ENCODE measurements at regions of chr15 and their contacts with region 1.

Region 1: DNA sequence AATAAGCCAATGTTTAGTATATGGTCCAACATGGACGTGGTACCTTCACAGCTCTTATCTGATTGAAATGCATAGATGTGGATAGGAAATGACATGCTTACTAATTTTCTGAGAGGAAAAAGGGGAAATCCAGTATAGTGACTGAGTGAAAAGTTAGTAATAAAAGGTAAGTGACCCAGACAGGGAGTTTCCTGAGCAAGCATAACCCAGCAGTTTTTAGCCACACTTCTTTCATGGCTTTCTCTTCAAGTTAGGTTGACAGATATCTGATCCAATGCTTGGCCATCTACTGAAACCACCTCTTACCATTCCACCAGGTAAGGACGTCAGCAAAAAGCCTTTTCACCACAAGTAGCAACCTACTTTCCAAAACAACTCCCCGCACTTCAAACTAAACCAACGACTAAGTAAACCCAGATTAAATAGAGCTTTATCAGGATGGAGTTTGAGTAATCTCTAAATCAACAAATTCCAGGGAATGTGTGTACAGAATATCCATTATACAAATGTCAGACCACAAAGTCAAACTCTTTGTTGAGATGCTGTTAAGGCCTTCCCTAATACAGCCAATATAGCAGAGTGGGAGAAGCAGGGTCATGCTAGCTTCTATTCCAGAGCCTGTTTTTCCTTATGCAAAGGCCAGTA is 329.7 kb downstream of the RORA start:
- DNase-seq: peak; percentile 42
- ATAC-seq: peak; percentile 85
- H3K4me3 Mint-ChIP-seq: no peak overlapping the region
- H3K27ac Mint-ChIP-seq: peak overlapping the region; percentile 66
- H3K4me1 Mint-ChIP-seq: peaks cover 53% of the 10 kb centered on the region
- H3K27me3 Mint-ChIP-seq: peaks cover 6% of the 10 kb centered on the region

Region 2: GRCh38 chr15:60172143-60172542 is 727.3 kb before region 1 on chr15:
- CTCF ChIA-PET with region 1: no interaction called
- POLR2A ChIA-PET with region 1: no interaction called
- intact Hi-C with region 1: no loop called
- DNase-seq: no peak
- ATAC-seq: no peak
- H3K4me3 Mint-ChIP-seq: no peak overlapping the region
- H3K27ac Mint-ChIP-seq: no peak overlapping the region
- H3K4me1 Mint-ChIP-seq: no peaks in the 10 kb centered on the region
- H3K27me3 Mint-ChIP-seq: peaks cover 8% of the 10 kb centered on the region

Region 3: GRCh38 chr15:60580650-60581376 is 318.6 kb before region 1 on chr15:
- CTCF ChIA-PET with region 1: interaction called, 19 read pairs
- POLR2A ChIA-PET with region 1: interaction called, 15 read pairs
- intact Hi-C with region 1: loop called (anchors 2 to 5 kb)
- DNase-seq: peak; percentile 64
- ATAC-seq: peak; percentile 80
- H3K4me3 Mint-ChIP-seq: peak overlapping the region; percentile 54
- H3K27ac Mint-ChIP-seq: peak overlapping the region; percentile 87
- H3K4me1 Mint-ChIP-seq: peaks cover 90% of the 10 kb centered on the region
- H3K27me3 Mint-ChIP-seq: no peaks in the 10 kb centered on the region

Region 4: DNA sequence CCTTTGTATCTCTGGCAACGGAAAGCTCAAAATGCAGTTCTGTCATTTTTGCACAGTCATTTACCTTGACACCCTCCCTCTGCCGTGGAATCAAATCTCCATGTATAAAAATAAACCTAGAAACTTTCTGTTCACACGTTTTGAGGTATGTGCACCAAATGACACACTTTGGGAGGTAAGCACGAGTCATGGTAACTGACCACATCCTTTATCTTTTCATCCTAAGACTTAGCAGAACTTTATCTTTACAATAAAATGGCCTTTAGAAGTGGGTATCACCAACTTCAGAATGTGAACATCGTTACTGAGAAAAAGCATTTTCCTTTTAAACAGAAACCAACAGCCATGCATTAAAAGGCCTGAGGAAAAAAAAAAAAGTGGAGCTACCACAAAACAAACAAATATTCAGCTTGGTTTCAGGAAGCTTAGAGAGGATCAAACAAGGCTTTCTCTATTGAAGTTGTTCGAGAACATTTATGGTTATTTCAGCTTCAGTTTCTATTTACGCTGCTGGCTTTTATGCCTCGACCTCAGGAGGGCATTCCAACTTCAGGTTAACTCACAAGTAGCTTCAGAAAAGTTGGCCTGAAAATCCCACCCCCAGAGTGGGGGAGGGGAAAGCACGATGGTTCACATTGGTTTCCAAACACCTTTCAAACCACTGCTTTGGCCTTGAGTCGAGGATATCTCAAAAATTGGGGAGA is 249.4 kb before region 1 on chr15:
- CTCF ChIA-PET with region 1: interaction called, 5 read pairs
- POLR2A ChIA-PET with region 1: no interaction called
- intact Hi-C with region 1: loop called (anchors 1 to 2 kb)
- DNase-seq: peak; percentile 68
- ATAC-seq: peak; percentile 89
- H3K4me3 Mint-ChIP-seq: peak overlapping the region; percentile 27
- H3K27ac Mint-ChIP-seq: peak overlapping the region; percentile 82
- H3K4me1 Mint-ChIP-seq: peaks cover 47% of the 10 kb centered on the region
- H3K27me3 Mint-ChIP-seq: no peaks in the 10 kb centered on the region

Region 5: GRCh38 chr15:60798821-60799220 is 100.6 kb before region 1 on chr15:
- CTCF ChIA-PET with region 1: interaction called, 7 read pairs
- POLR2A ChIA-PET with region 1: interaction called, 8 read pairs
- intact Hi-C with region 1: loop called (anchors 1 kb)
- DNase-seq: peak; percentile 81
- ATAC-seq: peak; percentile 80
- H3K4me3 Mint-ChIP-seq: no peak overlapping the region
- H3K27ac Mint-ChIP-seq: peak overlapping the region; percentile 95
- H3K4me1 Mint-ChIP-seq: peaks cover 85% of the 10 kb centered on the region
- H3K27me3 Mint-ChIP-seq: no peaks in the 10 kb centered on the region

Region 6: DNA sequence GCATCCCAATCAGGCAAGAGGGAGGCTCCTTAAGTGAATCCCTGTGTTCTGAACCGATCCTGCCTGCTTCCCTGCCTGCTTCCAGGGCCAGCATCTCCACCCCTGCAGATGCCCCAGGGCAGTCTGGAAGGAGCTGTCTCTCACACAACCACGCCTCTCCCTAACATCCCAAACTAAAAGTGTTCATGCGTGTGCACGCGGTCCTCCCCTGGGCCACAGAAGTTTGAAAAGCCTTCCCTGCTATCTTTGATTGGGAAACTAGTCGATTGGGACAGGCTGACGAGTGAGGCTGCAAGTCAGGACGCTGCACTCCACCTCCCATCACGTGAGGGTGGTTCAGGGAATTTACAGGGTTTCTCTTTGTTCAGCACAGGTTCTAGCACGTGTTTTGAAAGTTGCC is 79.6 kb before region 1 on chr15:
- CTCF ChIA-PET with region 1: no interaction called
- POLR2A ChIA-PET with region 1: no interaction called
- intact Hi-C with region 1: no loop called
- DNase-seq: no peak
- ATAC-seq: peak; percentile 30
- H3K4me3 Mint-ChIP-seq: peak overlapping the region; percentile 42
- H3K27ac Mint-ChIP-seq: peak overlapping the region; percentile 81
- H3K4me1 Mint-ChIP-seq: peaks cover 38% of the 10 kb centered on the region
- H3K27me3 Mint-ChIP-seq: no peaks in the 10 kb centered on the region

Region 7: DNA sequence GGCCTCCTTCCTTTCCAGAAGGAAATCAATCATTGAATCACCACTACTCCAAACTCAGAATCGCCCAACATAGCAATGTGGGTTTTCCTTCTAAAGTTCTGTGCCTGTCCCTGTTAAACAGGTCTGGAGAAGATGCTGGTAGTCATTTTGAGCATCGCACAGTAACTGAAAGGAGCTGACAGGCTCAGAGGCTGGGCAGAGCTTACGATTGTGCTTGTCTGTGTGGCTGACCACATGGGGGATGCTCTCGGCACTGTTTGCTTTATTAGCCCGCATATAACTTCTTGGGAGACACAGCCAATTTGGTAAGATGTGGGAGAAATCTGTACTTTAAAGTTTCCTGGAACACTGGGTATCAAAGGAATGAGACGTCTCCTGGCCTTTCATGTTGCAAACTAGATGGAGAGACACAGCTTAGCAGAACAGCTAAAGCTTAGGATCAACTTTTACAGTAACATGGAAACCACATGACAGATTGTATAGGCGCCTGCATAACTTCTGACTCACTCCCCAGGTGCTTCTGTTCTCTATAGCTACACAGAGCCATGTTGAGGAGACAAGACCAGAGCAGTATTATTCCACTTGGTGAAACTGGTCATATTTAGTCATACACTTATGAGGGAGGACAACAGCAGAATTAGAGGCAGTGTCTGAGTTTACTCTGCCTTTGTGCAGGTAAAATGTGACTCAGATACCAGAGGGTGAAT is 44.4 kb before region 1 on chr15:
- CTCF ChIA-PET with region 1: interaction called, 7 read pairs
- POLR2A ChIA-PET with region 1: interaction called, 4 read pairs
- intact Hi-C with region 1: loop called in 1 of 2 experiments (anchors 2 kb)
- DNase-seq: peak; percentile 48
- ATAC-seq: peak; percentile 99
- H3K4me3 Mint-ChIP-seq: no peak overlapping the region
- H3K27ac Mint-ChIP-seq: peak overlapping the region; percentile 33
- H3K4me1 Mint-ChIP-seq: peaks cover 64% of the 10 kb centered on the region
- H3K27me3 Mint-ChIP-seq: peaks cover 3% of the 10 kb centered on the region

Measured in activated CD4-positive, alpha-beta T cell treated with anti-CD3 and anti-CD28 coated beads for 36 hours (primary cell).